ENCODE measurements at regions of chr1 and their contacts with region 1.

Region 1: DNA sequence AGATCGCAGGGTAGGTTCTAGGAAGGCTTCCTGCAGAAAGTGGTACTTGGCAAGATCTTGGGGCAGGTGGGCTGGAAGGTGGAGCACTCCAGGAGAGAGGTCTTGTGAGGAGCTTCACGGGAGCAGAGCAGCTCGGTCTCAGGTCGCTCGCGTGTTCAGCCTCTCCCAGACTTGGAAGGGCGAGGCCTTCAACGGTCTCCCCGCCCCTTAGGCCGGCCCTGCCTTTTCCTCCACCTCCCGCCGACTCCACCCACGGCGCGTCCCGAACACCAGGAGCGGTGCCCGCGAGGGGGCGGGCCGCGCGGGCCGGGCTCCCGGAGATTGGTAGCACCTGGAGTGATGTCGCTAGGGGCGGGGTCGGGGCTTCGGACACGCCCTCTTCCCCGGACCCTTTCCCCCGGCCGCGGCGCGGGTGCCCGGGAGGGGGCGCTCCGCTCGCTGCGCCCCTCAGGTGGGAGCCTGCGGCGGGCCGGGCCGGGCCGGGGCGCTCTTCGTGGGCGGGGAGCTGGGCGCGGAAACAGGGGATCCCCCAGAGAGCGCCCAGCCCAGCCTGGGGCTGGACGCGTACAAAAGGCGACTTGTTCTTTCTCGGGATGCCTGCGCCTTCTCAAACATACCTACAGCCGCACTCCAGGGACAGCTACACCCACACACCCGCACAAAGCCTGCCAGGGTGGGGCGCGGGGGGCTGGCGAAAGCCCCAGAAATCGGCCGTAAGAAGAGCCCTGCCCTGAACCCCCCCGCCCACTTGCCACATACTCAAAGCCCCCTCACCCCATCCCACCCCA is 35.5 kb downstream of the AHDC1 start:
- DNase-seq: peak; percentile 94
- H3K4me3 Mint-ChIP-seq: peak overlapping the region; percentile 48
- H3K27ac Mint-ChIP-seq: peak overlapping the region; percentile 59
- H3K4me1 Mint-ChIP-seq: peaks cover 27% of the 10 kb centered on the region
- H3K27me3 Mint-ChIP-seq: peaks cover 4% of the 10 kb centered on the region

Region 2: DNA sequence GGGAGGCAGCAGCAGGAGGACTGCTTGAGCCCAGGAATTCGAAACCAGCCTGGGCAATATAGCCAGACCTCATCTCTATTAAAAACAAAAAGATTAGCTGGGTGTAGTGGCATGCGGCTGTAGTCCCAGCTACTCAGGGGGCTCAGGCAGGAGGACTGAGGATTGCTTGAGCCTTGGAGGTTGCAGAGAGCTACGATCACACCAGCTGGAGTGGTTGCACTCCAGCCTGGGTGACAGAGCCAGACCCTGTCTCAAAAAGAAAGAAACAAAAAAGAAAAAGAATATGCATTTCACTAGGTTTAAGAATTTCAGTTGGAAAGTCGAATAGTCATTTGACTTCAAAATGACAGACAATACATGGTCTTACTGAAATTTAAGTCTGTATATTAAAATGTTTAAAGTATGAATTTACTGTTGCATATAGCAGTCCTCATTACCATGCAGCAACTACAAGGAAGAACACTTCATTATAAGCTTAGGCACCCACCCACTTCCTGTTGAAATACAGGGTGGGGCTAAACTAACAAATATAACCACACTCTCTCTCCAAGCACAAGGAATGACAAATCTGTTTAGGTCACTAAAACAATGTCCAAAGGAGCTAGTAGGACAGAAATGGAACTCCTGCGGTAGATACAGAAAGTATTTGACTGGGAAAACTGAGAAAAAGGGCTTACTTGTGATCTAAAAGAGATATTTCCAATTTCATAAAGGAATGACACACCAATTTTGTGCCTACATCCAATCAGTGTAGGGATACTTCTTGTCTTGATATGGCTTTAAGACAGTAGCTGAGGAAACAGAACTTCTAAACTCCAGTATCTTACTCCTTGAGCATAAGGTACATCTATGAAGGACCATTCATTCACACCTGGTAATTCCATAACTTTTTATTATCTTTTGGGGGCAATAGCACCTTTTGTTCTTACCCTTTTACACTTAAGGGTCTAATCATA is 132.0 kb before region 1 on chr1:
- CTCF ChIA-PET with region 1: no interaction called
- POLR2A ChIA-PET with region 1: no interaction called
- DNase-seq: peak; percentile 32
- H3K4me3 Mint-ChIP-seq: peak overlapping the region; percentile 55
- H3K27ac Mint-ChIP-seq: peak overlapping the region; percentile 89
- H3K4me1 Mint-ChIP-seq: peaks cover 70% of the 10 kb centered on the region
- H3K27me3 Mint-ChIP-seq: no peaks in the 10 kb centered on the region

Region 3: GRCh38 chr1:27581823-27582243 is 13.3 kb after region 1 on chr1:
- CTCF ChIA-PET with region 1: interaction called, 41 read pairs
- POLR2A ChIA-PET with region 1: no interaction called
- DNase-seq: no peak
- H3K4me3 Mint-ChIP-seq: no peak overlapping the region
- H3K27ac Mint-ChIP-seq: no peak overlapping the region
- H3K4me1 Mint-ChIP-seq: peaks cover 4% of the 10 kb centered on the region
- H3K27me3 Mint-ChIP-seq: peaks cover 2% of the 10 kb centered on the region

Region 4: GRCh38 chr1:27632387-27633297 is 64.1 kb after region 1 on chr1:
- CTCF ChIA-PET with region 1: no interaction called
- POLR2A ChIA-PET with region 1: no interaction called
- DNase-seq: peak; percentile 42
- H3K4me3 Mint-ChIP-seq: peak overlapping the region; percentile 32
- H3K27ac Mint-ChIP-seq: peak overlapping the region; percentile 81
- H3K4me1 Mint-ChIP-seq: peaks cover 74% of the 10 kb centered on the region
- H3K27me3 Mint-ChIP-seq: peaks cover 10% of the 10 kb centered on the region